ENCODE measurements at regions of chr15 and their contacts with region 1.

Region 1: DNA sequence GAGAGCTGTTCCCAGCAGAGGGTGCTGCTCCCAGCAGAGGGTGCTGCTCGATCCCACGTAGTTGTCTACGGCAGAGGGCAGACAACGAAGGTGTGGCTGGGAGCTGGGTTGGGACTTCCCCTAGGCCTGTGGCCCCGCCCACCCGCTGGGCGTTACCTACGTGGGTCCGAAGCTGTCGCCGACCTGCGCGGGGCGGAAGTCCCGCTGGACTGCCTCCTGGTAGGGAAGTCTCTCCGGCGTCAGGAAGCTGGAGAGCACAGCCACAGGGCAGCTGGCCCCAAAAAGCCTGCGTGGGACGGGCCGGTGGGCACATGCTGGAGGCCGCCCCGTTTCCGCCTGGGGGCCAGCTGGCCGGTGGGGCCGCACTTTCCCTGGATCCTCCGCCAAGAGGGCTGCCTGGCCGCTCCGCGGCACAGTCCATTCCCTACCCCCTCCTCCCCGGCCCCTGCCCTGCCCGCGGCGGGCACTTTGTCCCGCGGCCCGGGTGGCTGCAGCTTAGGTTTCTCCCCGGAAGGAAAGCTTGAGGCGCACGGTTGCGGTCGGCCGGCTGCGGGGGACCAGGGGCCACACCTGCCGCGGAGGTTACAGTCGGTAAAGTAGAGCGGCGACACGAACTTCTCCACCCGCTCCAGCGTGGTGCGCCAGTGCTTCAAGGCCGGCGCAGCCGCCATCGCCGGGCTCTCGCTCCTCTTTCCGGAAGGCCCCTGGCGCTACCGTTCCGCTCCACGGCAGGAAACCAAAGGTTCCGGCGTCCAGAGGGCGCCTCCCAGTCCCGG is at the start of gene MAN2C1:
- DNase-seq: peak; percentile 78 to 96 (median 91)
- H3K4me3 ChIP-seq: peak within 1 kb of the TSS; percentile 62 to 99 (median 89)
- H3K27ac ChIP-seq: peak within 1 kb of the TSS; percentile 75 to 99 (median 94)
- H3K27me3 ChIP-seq: no peaks in the 10 kb centered on the region
- CTCF ChIP-seq: peak; percentile 58 to 90 (median 78)
- total RNA-seq, gene MAN2C1: 146 to 372 (median 229) TPM

Region 2: GRCh38 chr15:75023181-75023871 is 344.8 kb before region 1 on chr15 and contains the start of gene PPCDC:
- intact Hi-C with region 1: loop called in 1 of 2 experiments (anchors 10 kb)
- DNase-seq: peak; percentile 92 to 98 (median 97)
- H3K4me3 ChIP-seq: peak within 1 kb of the TSS; percentile 49 to 98 (median 89)
- H3K27ac ChIP-seq: peak within 1 kb of the TSS in 57 of 59 donors; percentile 27 to 96 (median 88)
- H3K27me3 ChIP-seq: no peaks in the 10 kb centered on the region
- CTCF ChIP-seq: peak in 47 of 56 donors; percentile 3 to 62 (median 33)
- total RNA-seq, gene PPCDC: 3.9 to 23.6 (median 9.9) TPM

Region 3: DNA sequence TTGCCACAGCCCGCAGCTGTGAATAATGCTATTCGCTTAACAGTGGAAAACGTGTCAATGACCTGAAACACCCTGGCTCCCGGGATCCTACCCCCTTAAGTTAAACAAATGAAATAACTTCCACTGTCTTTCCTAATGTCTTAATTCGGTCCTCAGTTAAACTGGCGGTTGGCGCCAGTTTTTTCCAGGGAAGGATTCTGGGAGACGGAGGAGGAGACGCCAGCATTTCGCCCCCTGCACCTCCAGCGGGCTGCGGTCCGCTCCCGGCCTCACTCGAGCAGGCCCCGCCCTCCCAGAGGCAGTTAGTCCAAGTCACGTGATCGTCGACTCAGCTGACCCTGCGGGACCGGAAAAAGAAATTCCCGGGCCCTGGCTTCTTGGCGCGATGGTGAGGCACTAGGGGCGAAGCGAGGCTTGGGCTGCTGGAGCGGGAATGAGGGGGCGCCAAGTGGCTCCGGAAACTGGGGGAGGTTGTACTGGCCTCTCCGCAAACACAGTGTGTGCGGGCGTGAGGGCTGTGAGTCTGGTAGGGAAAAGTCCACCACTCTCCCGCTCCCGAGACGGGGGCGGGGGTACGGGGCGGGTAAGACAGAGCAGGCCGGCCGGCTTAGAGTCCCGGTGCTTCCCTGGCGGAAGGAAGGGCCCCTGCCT is 32.3 kb before region 1 on chr15 and contains the start of gene COMMD4:
- intact Hi-C with region 1: loop called in 1 of 2 experiments (anchors 2 kb)
- DNase-seq: peak; percentile 93 to 97 (median 96)
- H3K4me3 ChIP-seq: peak within 1 kb of the TSS; percentile 70 to 98 (median 90)
- H3K27ac ChIP-seq: peak within 1 kb of the TSS in 54 of 59 donors; percentile 19 to 86 (median 71)
- H3K27me3 ChIP-seq: no peaks in the 10 kb centered on the region
- CTCF ChIP-seq: peak in 38 of 56 donors; percentile 12 to 57 (median 23)
- total RNA-seq, gene COMMD4: 26.8 to 67.8 (median 44.8) TPM

Region 4: GRCh38 chr15:75453703-75454470 is 85.8 kb after region 1 on chr15:
- intact Hi-C with region 1: loop called (anchors 2 kb)
- DNase-seq: peak; percentile 94 to 99 (median 98)
- H3K4me3 ChIP-seq: peak overlapping the region; percentile 60 to 98 (median 91)
- H3K27ac ChIP-seq: peak overlapping the region; percentile 65 to 99 (median 95)
- H3K27me3 ChIP-seq: no peaks in the 10 kb centered on the region
- CTCF ChIP-seq: peak in 22 of 56 donors; percentile 8 to 43 (median 16)

Region 5: GRCh38 chr15:75578948-75579920 is 211.1 kb after region 1 on chr15 and contains the start of gene PTPN9:
- intact Hi-C with region 1: loop called in 1 of 2 experiments (anchors 5 kb)
- DNase-seq: peak; percentile 65 to 85 (median 81)
- H3K4me3 ChIP-seq: peak within 1 kb of the TSS; percentile 64 to 97 (median 88)
- H3K27ac ChIP-seq: peak within 1 kb of the TSS; percentile 45 to 98 (median 93)
- H3K27me3 ChIP-seq: no peaks in the 10 kb centered on the region
- CTCF ChIP-seq: peak in 53 of 56 donors; percentile 3 to 59 (median 43)
- total RNA-seq, gene PTPN9: 17.1 to 54.6 (median 33.8) TPM

Region 6: DNA sequence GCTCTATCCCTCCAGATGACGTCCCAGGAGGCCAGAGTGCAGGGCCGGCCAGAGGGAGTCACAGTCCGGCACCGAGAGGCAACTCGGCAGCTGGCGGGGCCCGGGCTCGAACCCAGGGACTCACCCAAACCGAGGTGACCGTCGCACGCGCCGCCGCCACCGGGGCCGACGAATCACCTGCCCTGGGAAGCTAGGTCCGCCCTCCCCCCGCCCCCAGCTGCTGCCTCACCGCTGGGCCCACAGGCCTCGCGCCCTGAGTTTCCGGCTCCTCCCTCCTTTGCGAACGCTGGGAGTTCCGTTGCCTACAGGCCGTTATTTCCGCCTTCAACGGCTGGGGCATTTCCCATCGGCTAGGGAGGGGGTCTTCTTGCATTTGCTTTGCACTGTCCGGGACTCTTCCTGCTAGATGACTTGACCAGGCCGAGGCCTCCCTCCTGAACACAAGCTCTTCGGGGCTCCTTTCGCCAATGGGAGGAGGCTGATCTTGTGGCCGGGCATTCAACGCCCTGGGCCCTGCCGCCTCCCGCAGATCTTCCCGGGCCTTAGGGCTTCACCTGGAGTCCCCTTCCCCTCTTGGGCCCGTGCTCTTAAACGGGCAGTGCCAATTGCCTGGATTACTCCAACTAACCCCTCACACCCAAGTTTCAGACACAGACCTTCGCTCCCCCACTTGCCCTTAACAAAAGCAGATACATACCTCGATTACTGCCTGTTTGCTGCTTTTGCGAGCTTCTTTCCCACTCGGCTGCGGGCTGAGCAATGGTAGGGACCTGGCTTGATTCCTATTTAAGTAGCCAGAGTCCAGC is 257.6 kb after region 1 on chr15 and contains the start of gene SNUPN:
- intact Hi-C with region 1: loop called (anchors 5 kb)
- DNase-seq: peak; percentile 82 to 95 (median 92)
- H3K4me3 ChIP-seq: peak within 1 kb of the TSS; percentile 62 to 99 (median 94)
- H3K27ac ChIP-seq: peak within 1 kb of the TSS; percentile 81 to 99 (median 96)
- H3K27me3 ChIP-seq: no peaks in the 10 kb centered on the region
- CTCF ChIP-seq: peak in 26 of 56 donors; percentile 8 to 51 (median 24)
- total RNA-seq, gene SNUPN: 20.8 to 41.9 (median 29.4) TPM

Region 7: DNA sequence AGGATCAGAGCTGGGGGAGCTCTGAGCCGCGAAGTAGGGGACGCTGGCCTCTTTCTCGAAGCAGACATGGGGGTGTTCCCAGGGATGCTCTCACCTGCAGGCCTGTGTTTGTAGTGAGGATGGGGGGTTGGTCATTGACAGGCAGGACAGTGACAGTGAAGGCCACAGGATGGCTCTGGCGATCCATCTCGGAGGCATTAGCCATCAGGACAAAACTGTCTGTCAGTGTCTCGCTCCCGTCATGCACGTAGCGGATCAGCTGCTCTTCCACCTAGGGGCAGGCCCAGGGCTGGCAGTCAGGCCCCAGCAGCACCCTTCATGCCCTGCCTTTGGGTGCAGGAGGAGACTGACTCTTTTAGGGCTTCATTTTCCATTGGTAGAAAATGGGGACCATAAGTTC is 316.5 kb after region 1 on chr15:
- intact Hi-C with region 1: loop called (anchors 5 kb)
- DNase-seq: no peak
- H3K4me3 ChIP-seq: no peak overlapping the region
- H3K27ac ChIP-seq: no peak overlapping the region
- H3K27me3 ChIP-seq: no peaks in the 10 kb centered on the region
- CTCF ChIP-seq: no peak

Measured in dorsolateral prefrontal cortex (tissue), 120 donors.